ENCODE measurements at regions of chr14 and their contacts with region 1.

Region 1: GRCh38 chr14:80996049-80996901 is 40.9 kb downstream of the TSHR start:
- DNase-seq: peak; percentile 40
- H3K4me3 ChIP-seq: no peak overlapping the region
- CTCF ChIP-seq: peak; percentile 67

Region 2: DNA sequence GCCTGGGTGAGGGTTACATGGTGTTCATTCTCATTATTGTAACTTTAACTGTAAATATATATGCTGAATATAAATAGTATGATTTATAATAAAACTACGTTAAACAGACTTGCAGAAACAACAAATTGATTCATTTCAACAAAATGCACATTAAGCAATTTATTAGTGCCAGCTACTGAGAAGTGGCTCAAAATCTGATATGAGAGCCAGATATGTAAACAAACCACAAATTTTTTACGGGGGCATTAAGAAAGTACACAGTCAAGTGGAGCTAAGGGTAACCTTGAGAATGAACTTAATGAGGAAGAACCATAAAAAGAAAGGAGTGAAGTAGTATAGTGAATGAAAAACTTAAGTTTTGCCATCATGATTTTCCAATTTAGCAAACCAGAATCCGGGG is 95.0 kb before region 1 on chr14:
- CTCF ChIA-PET with region 1: no interaction called
- POLR2A ChIA-PET with region 1: no interaction called
- DNase-seq: no peak
- H3K4me3 ChIP-seq: no peak overlapping the region
- CTCF ChIP-seq: no peak

Region 3: DNA sequence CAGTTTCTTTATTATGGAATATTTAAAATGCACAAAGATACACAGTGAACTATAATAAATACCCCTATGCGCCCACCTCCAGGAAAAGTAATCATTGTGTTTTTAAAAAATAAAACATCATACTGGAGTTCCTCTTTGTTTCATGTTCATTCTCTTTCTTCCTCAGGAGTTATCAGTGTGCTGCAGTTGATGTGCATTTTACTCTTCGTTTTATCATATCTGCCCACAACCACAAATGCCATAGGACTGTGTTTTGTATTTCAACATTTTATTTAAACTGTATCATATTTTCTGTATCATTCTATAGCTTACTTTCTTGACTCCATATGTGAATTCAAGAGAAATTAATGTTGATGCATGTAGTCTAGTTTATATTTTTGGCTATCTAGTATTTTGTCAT is 13.1 kb after region 1 on chr14:
- CTCF ChIA-PET with region 1: interaction called, 19 read pairs
- POLR2A ChIA-PET with region 1: no interaction called
- DNase-seq: no peak
- H3K4me3 ChIP-seq: no peak overlapping the region
- CTCF ChIP-seq: no peak

Region 4: DNA sequence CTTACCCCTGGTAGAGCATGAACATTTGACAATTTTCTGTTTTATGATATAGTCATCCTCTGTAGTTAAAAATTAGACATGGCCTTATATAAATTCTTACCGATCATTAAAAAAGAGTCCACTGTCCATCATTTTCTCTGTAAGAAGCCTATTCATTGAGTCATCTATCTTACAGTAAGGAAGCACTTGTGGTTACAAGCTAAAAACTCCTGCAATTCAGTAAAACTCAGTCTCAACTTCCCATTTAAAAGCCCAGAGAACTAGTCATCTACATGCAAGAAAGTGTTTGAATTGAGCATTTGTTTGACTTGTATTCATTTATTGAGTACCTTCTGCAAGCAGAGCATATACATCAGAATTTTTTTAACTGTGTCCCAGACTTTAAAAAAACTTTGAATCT is 161.2 kb after region 1 on chr14:
- CTCF ChIA-PET with region 1: interaction called, 102 read pairs
- POLR2A ChIA-PET with region 1: no interaction called
- DNase-seq: no peak
- H3K4me3 ChIP-seq: no peak overlapping the region
- CTCF ChIP-seq: no peak

Region 5: DNA sequence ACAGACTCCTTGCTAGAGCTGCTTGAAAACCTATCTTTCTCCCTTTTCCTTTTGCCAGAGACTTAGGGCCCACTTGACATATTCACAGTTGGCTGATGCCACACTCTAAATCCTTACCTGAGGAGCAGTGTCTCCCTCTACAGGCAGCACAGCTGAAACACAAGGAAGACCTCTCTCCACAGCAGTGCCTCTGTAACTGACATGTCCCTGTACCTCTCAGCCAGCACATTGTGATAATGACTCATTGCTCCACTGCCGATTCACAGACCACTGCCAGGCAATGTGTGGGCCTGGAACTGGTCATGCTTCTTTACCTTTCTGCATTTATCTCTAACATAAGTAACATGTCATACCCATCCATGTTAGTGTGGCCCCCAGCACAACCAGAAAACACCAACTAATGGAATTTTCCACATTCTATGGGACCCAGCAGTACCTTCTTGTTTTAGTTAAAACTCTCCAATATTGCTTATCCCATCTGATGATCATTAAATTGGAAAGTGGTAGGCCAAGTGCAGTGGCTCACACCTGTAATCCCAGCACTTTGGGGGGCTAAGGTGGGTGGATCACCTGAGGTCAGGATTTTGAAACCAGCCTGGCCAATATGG is 168.0 kb after region 1 on chr14:
- CTCF ChIA-PET with region 1: interaction called, 102 read pairs
- POLR2A ChIA-PET with region 1: interaction called, 3 read pairs
- DNase-seq: no peak
- H3K4me3 ChIP-seq: no peak overlapping the region
- CTCF ChIP-seq: peak; percentile 59

Region 6: DNA sequence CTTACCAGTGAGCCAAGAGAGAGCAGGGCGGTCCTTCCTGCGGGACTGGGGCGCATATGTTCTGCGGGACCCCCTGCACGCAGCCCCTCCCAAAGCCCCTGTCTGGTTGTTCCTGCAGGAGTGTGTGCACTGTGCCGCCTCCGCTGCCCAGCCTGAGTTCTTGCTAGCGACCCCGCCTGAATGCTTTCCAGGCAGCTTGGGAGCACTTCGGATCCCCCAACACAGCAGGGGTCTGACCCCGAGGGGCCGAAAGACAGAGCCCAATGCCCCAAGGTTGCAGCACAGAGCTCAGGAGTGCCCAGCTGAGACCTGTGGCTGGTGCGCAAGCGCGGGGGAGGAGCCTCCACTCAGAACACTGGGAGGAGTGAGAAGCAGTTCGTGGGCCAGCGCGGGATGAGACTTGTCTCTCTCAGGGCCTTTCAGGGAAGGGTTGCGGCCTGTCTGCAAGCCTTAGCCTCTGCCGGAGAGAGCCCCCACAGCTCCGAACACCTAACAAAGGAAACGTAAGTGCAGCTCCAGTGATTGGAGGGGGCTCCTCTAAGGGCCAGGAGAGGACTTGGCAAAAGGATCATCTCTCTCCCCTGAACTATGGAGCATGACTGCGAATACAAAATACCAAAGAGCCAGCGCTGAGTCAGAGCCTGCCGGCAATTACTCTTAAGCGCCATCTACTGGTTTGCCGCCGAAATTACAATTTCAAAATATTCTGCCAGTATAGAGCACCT is 174.0 kb after region 1 on chr14:
- CTCF ChIA-PET with region 1: interaction called, 102 read pairs
- POLR2A ChIA-PET with region 1: no interaction called
- DNase-seq: peak; percentile 37
- H3K4me3 ChIP-seq: peak overlapping the region; percentile 72
- CTCF ChIP-seq: peak; percentile 69

Region 7: GRCh38 chr14:81211844-81212243 is 215.6 kb after region 1 on chr14:
- CTCF ChIA-PET with region 1: interaction called, 11 read pairs
- POLR2A ChIA-PET with region 1: no interaction called
- DNase-seq: no peak
- H3K4me3 ChIP-seq: no peak overlapping the region
- CTCF ChIP-seq: peak; percentile 14

Region 8: DNA sequence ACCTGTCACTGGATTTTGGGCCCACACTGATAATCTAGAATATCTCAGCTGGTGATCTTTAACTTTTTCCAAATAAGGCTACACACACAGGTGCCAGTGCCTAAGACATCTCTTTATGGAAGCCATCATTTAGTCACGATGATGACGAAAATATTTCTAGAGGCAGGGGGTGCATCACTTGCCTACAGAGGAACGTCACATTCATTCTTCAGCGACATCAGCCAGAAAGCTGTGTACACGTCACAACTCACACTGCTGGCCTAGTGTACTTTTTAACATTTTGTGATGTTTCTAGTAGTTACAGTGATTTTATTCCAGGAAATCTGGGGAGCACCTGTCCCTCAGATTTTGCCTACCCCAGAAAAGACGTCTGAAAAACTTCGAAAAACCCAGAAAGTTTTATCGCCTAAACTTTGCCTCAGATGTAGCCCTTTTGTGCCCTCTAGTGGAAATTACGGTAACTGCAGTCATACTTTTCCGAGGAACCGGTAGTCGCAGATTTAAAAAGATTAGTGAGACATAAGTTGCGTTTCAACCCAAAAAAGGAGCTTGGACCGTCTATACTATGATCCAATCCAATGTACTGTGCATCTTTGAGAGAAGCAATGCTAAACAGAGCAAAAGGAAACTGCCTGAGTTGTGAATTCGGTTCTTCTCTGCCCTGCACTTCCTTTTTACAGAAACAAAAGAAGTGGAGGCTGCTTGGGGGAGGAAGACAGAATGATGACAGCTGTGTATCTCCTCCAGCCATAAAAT is 468.1 kb after region 1 on chr14:
- CTCF ChIA-PET with region 1: interaction called, 16 read pairs
- POLR2A ChIA-PET with region 1: no interaction called
- DNase-seq: no peak
- H3K4me3 ChIP-seq: peak overlapping the region; percentile 60
- CTCF ChIP-seq: peak; percentile 72

Measured in AG04449 (cell line).